ENCODE measurements at regions of chr12 and their contacts with region 1.

Region 1: GRCh38 chr12:32755654-32756475 is at the start of gene YARS2:
- H3K4me3 ChIP-seq: peak within 1 kb of the TSS; percentile 95
- H3K27ac ChIP-seq: peak within 1 kb of the TSS; percentile 50
- H3K4me1 ChIP-seq: peaks cover 2% of the 10 kb centered on the region; the same call in 1 of the 2 replicates
- CTCF ChIP-seq: peak; percentile 90

Region 2: DNA sequence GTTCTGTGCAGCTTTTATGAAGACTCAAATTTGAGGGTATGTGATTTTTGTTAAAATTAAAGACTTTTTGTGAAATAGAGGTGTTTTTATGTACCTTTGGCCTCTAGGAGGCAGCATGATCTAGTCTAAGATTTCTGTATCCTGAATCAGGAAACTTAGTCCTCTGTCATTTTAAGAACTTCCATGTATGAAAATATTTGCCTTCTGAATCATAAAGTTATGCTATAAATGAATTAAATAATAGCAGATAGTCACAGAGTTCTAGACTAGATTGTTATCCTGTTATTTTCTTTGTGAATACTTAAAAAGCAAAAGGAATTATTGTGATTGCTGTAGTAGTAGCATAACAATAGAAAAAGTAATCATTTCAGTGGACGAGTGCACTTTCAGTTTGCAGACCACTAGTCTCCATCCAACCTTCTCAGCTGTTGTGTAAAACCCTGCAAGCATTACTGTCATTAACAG is 300.2 kb before region 1 on chr12:
- CTCF ChIA-PET with region 1: interaction called, 18 read pairs
- POLR2A ChIA-PET with region 1: no interaction called
- H3K4me3 ChIP-seq: peak overlapping the region; percentile 17
- H3K27ac ChIP-seq: no peak overlapping the region
- H3K4me1 ChIP-seq: no peaks in the 10 kb centered on the region
- CTCF ChIP-seq: peak; percentile 17; the same call in 1 of the 2 replicates

Region 3: GRCh38 chr12:32516230-32516629 is 239.6 kb before region 1 on chr12:
- CTCF ChIA-PET with region 1: no interaction called
- POLR2A ChIA-PET with region 1: no interaction called
- H3K4me3 ChIP-seq: no peak overlapping the region
- H3K27ac ChIP-seq: no peak overlapping the region
- H3K4me1 ChIP-seq: no peaks in the 10 kb centered on the region
- CTCF ChIP-seq: no peak

Region 4: GRCh38 chr12:32826807-32827412 is 71.0 kb after region 1 on chr12:
- CTCF ChIA-PET with region 1: no interaction called
- POLR2A ChIA-PET with region 1: interaction called, 10 read pairs
- H3K4me3 ChIP-seq: no peak overlapping the region
- H3K27ac ChIP-seq: no peak overlapping the region
- H3K4me1 ChIP-seq: no peaks in the 10 kb centered on the region
- CTCF ChIP-seq: no peak

Region 5: GRCh38 chr12:32906407-32907165 is 150.7 kb after region 1 on chr12:
- CTCF ChIA-PET with region 1: interaction called, 11 read pairs
- POLR2A ChIA-PET with region 1: no interaction called
- H3K4me3 ChIP-seq: no peak overlapping the region
- H3K27ac ChIP-seq: no peak overlapping the region
- H3K4me1 ChIP-seq: peaks cover 11% of the 10 kb centered on the region
- CTCF ChIP-seq: no peak

Region 6: DNA sequence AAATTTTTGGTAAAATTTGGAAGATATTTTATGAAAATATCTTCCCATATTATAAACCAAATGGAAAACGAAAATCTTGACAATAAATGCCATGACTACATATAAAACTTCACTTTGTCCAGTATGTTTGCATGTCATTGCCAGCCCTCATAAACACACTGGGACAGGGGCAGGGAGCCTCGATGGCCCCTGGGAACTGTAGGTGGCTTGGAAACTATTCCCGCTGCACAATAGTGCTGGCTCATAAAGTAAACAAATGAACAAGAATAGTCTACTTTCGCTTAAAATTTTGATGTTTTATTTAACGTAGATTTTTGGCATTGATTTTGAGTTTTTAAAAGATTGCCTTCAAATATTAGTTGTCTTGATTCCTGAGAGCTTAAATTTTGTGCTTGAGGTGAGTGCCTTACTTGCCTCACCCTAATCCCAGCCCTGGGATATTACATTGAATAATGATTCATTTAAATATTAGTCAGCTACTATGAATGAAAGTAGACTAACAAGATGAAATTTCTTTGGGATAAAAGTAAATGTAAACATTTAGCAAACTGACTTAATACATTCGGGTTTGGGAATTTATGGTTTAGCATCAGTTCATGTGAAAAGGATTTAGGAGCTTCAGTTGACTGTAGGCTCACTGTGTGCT is 214.7 kb after region 1 on chr12:
- CTCF ChIA-PET with region 1: no interaction called
- POLR2A ChIA-PET with region 1: no interaction called
- H3K4me3 ChIP-seq: no peak overlapping the region
- H3K27ac ChIP-seq: no peak overlapping the region
- H3K4me1 ChIP-seq: no peaks in the 10 kb centered on the region
- CTCF ChIP-seq: no peak

Region 7: DNA sequence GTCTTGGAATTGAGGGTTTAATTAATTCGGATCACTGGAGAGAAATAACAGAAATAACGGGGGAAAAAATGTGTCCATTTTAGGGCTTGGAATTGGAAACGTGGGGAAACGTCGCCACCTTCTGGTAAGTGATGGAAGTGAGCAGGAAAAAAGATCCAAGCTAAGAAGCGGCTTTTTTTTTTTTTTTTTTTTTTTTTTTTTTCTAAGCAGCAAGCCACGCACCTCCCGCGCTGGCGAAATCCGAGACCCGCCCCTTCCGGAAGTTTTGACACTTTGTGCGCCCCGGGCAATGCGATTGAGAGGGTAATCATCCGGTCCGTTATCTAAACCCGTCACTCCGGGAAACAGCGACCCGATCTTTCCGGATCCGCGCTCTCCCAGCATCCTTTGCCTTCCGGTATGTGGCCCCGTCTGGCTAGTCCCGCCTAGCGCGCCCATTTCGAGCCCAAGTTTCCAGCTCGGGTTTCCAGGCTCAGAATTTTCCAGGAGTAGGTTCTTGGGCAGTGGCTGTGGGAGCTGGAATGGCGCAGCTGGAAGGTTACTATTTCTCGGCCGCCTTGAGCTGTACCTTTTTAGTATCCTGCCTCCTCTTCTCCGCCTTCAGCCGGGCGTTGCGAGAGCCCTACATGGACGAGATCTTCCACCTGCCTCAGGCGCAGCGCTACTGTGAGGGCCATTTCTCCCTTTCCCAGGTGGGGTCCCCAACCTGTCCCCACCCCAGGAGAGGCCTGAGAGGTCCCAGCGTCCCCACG is 1266.4 kb after region 1 on chr12 and contains the start of gene ALG10:
- CTCF ChIA-PET with region 1: interaction called, 14 read pairs
- POLR2A ChIA-PET with region 1: interaction called, 19 read pairs
- H3K4me3 ChIP-seq: peak within 1 kb of the TSS; percentile 87
- H3K27ac ChIP-seq: peak within 1 kb of the TSS; percentile 74
- H3K4me1 ChIP-seq: no peaks in the 10 kb centered on the region
- CTCF ChIP-seq: peak; percentile 34; the same call in 1 of the 2 replicates